OCI-LY7 (cell line): ENCODE measurements at regions of chr3 and their contacts with region 1.

Region 1: GRCh38 chr3:101069901-101070798 is 76.9 kb upstream of the ABI3BP start:
- DNase-seq: peak; percentile 45
- H3K4me3 ChIP-seq: no peak overlapping the region
- H3K27ac ChIP-seq: no peak overlapping the region
- H3K4me1 ChIP-seq: no peaks in the 10 kb centered on the region
- CTCF ChIP-seq: peak; percentile 88

Region 2: DNA sequence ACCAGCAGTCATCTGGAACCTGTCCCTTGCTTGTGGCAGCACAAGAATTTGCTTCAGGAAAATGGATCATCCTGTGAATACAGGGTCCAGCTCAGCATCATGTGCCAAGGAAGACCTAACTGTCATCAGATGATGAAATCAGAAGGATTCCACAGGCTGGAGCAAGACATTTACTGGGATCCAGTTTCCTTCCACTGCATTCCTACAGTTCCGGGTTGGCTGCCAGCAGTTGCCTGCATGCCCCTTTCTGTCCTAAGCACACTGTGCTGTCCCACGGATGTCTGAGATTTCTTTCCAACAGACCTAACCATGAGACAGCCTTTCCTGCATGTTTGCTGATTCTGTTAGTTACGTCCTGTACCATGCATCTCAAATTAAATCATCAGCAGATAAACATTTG is 109.5 kb after region 1 on chr3:
- CTCF ChIA-PET with region 1: no interaction called
- POLR2A ChIA-PET with region 1: no interaction called
- intact Hi-C with region 1: no loop called
- DNase-seq: no peak
- H3K4me3 ChIP-seq: no peak overlapping the region
- H3K27ac ChIP-seq: no peak overlapping the region
- H3K4me1 ChIP-seq: no peaks in the 10 kb centered on the region
- CTCF ChIP-seq: no peak

Region 3: DNA sequence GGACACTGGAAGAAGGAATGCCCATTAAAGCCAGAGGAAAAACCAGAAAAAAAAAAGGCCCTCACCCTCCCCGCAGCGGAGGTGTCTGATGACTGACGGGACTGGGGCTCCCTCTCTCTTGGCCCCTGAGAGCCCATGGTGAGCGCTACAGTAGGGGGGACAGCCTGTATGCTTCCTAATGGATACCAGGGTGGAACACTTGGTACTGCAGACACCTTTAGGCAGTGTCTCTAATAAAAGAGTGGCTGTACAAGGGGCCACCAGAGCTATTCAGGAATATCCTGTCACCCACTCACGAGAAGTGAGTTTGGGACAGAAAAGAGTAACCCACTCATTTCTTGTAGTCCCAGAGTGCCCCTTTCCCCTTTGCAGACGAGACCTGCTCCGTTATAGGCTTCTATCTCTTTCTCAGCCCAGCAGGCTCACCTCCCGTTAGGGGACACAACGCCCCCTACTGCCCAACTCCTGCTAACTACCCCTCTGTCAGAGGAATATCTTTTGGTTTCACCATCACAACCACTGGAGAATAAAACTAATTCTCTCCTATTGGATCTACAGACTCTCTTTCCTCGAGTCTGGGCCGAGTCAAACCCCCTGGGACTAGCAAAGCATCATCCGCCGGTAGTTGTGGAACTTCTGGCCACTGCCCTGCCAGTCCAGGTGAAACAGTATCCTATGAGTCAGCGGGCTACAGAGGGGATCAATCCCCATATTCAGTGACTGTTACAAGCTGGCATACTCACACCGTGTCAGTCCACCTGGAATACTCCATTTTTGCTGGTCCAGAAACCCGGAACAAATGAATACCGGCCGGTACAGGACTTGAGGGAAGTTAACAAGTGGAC is 566.0 kb after region 1 on chr3:
- CTCF ChIA-PET with region 1: no interaction called
- POLR2A ChIA-PET with region 1: no interaction called
- intact Hi-C with region 1: loop called (anchors 10 kb)
- DNase-seq: peak; percentile 73
- H3K4me3 ChIP-seq: no peak overlapping the region
- H3K27ac ChIP-seq: no peak overlapping the region
- H3K4me1 ChIP-seq: no peaks in the 10 kb centered on the region
- CTCF ChIP-seq: peak; percentile 90